Pancreas (tissue), 10 donors: ENCODE measurements at regions of chr10 and their contacts with region 1.

Region 1: DNA sequence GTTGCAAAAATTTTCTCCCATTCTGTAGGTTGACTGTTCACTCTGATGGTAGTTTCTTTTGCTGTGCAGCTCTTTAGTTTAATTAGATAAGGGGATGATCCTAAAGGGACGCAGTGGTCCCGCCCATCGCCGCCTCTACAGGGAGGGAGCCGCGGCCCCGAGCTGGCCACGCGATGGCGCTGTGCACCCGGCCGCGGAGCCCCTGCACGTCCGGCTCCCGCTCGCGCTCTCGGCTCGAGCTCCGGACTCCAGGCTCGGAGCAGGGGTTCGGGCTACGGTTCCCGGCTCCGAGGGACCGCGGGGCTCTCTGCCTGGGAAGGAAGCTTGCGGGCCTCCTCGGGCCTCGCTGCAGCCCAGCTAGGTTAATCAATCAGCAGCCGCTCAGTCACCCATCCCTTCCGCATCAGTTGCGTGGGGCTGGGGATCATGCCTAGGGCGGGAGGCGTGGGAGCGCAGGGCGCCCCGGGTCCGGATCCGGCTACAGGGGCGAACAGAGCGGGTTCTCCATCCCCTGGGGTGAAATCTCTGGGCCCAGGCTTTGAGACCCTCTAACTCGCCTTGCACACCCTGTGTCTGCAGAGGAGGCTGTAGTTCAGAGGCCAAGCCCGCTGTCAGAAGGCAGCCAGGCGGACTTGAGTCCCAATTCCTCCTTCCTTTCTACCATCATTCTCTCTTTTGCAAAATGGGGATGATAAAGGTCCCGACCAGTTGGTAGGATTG is 97.9 kb downstream of the WDR11 start:
- DNase-seq: peak; percentile 29 to 90 (median 69)
- ATAC-seq: peak; percentile 84 to 95 (median 93)
- H3K4me3 ChIP-seq: peak overlapping the region in 3 of 4 donors; percentile 15 to 43 (median 32)
- H3K27ac ChIP-seq: no peak overlapping the region
- H3K4me1 ChIP-seq: peaks cover 0 to 5% (median 4%) of the 10 kb centered on the region in 3 donors
- H3K27me3 ChIP-seq: peaks cover 0 to 6% (median 0%) of the 10 kb centered on the region in 4 donors
- CTCF ChIP-seq: peak; percentile 77 to 90 (median 84)

Region 2: GRCh38 chr10:121615435-121615793 is 666.4 kb after region 1 on chr10:
- intact Hi-C with region 1: loop called in 1 of 3 experiments (anchors 10 kb)
- DNase-seq: no peak
- ATAC-seq: no peak
- H3K4me3 ChIP-seq: no peak overlapping the region
- H3K27ac ChIP-seq: no peak overlapping the region
- H3K4me1 ChIP-seq: no peaks in the 10 kb centered on the region
- H3K27me3 ChIP-seq: no peaks in the 10 kb centered on the region
- CTCF ChIP-seq: no peak

Region 3: DNA sequence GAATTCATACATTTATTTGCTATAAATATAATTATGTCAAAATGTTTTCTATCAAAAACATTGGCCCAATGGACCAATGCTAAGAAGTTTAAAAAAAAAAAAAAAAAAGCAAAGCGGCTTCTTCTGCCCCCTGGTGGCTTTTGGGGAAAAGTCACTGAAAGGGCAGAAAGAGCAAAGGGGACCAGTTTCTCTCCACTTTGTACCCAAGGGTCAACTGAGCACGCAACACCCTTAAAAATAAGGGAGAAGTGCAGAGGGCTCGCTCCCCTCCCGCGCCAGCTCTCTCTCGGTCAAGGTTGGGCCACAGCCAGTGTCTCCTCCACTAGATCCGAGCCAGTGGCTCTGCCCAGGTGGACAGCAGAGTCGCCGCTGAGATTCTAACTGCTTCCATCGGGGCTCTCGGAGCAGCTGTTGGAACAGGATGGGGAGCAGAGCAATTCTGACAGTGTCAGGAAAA is 785.6 kb after region 1 on chr10:
- intact Hi-C with region 1: loop called in 2 of 3 experiments (anchors 5 kb)
- DNase-seq: peak in 2 of 6 donors; percentile 17 to 35
- ATAC-seq: peak in 3 of 4 donors; percentile 43 to 66 (median 43)
- H3K4me3 ChIP-seq: no peak overlapping the region
- H3K27ac ChIP-seq: no peak overlapping the region
- H3K4me1 ChIP-seq: no peaks in the 10 kb centered on the region
- H3K27me3 ChIP-seq: peaks cover 0 to 6% (median 0%) of the 10 kb centered on the region in 4 donors
- CTCF ChIP-seq: peak; percentile 55 to 69 (median 60)